ENCODE measurements at regions of chr10 and their contacts with region 1.

Region 1: GRCh38 chr10:98134431-98135221 is at the start of gene R3HCC1L:
- DNase-seq: peak; percentile 94
- H3K4me3 Mint-ChIP-seq: peak within 1 kb of the TSS; percentile 89
- H3K27ac Mint-ChIP-seq: peak within 1 kb of the TSS; percentile 96
- H3K4me1 Mint-ChIP-seq: peaks cover 36% of the 10 kb centered on the region
- H3K27me3 Mint-ChIP-seq: no peaks in the 10 kb centered on the region
- total RNA-seq, gene R3HCC1L: 13.4 to 13.6 TPM

Region 2: GRCh38 chr10:97292097-97292862 is 842.3 kb before region 1 on chr10 and contains the start of gene ARHGAP19:
- CTCF ChIA-PET with region 1: no interaction called
- intact Hi-C with region 1: loop called (anchors 5 kb)
- DNase-seq: peak; percentile 98
- H3K4me3 Mint-ChIP-seq: peak within 1 kb of the TSS; percentile 91
- H3K27ac Mint-ChIP-seq: peak within 1 kb of the TSS; percentile 88
- H3K4me1 Mint-ChIP-seq: peaks cover 23% of the 10 kb centered on the region
- H3K27me3 Mint-ChIP-seq: no peaks in the 10 kb centered on the region
- total RNA-seq, gene ARHGAP19: 76.7 to 91.9 TPM

Region 3: GRCh38 chr10:97640174-97640867 is 494.3 kb before region 1 on chr10 and contains the start of gene PI4K2A:
- CTCF ChIA-PET with region 1: no interaction called
- intact Hi-C with region 1: loop called (anchors 1 kb)
- DNase-seq: peak; percentile 100
- H3K4me3 Mint-ChIP-seq: peak within 1 kb of the TSS; percentile 93
- H3K27ac Mint-ChIP-seq: peak within 1 kb of the TSS; percentile 73
- H3K4me1 Mint-ChIP-seq: peaks cover 18% of the 10 kb centered on the region
- H3K27me3 Mint-ChIP-seq: no peaks in the 10 kb centered on the region
- total RNA-seq, gene PI4K2A: 8.9 to 9.4 TPM

Region 4: GRCh38 chr10:97736902-97737769 is 397.5 kb before region 1 on chr10 and contains the start of gene ZFYVE27:
- CTCF ChIA-PET with region 1: no interaction called
- intact Hi-C with region 1: loop called (anchors 2 kb)
- DNase-seq: peak; percentile 98
- H3K4me3 Mint-ChIP-seq: peak within 1 kb of the TSS; percentile 92
- H3K27ac Mint-ChIP-seq: peak within 1 kb of the TSS; percentile 93
- H3K4me1 Mint-ChIP-seq: peaks cover 44% of the 10 kb centered on the region
- H3K27me3 Mint-ChIP-seq: no peaks in the 10 kb centered on the region
- total RNA-seq, gene ZFYVE27: 18.0 to 18.4 TPM

Region 5: GRCh38 chr10:98097616-98098015 is 37.0 kb before region 1 on chr10:
- CTCF ChIA-PET with region 1: no interaction called
- intact Hi-C with region 1: no loop called
- DNase-seq: no peak
- H3K4me3 Mint-ChIP-seq: no peak overlapping the region
- H3K27ac Mint-ChIP-seq: no peak overlapping the region
- H3K4me1 Mint-ChIP-seq: no peaks in the 10 kb centered on the region
- H3K27me3 Mint-ChIP-seq: peaks cover 7% of the 10 kb centered on the region

Region 6: GRCh38 chr10:98446661-98447221 is 312.1 kb after region 1 on chr10 and contains the start of gene HPS1:
- CTCF ChIA-PET with region 1: no interaction called
- intact Hi-C with region 1: loop called (anchors 1 kb)
- DNase-seq: peak; percentile 86
- H3K4me3 Mint-ChIP-seq: peak within 1 kb of the TSS; percentile 88
- H3K27ac Mint-ChIP-seq: peak within 1 kb of the TSS; percentile 84
- H3K4me1 Mint-ChIP-seq: peaks cover 40% of the 10 kb centered on the region
- H3K27me3 Mint-ChIP-seq: peaks cover 3% of the 10 kb centered on the region
- total RNA-seq, gene HPS1: 28.1 to 31.0 TPM

Region 7: GRCh38 chr10:99732033-99732912 is 1597.6 kb after region 1 on chr10 and contains the starts of genes COX15 and CUTC:
- CTCF ChIA-PET with region 1: no interaction called
- intact Hi-C with region 1: loop called (anchors 1 kb)
- DNase-seq: peak; percentile 96
- H3K4me3 Mint-ChIP-seq: peak within 1 kb of the TSS; percentile 99
- H3K27ac Mint-ChIP-seq: peak within 1 kb of the TSS; percentile 96
- H3K4me1 Mint-ChIP-seq: peaks cover 32% of the 10 kb centered on the region
- H3K27me3 Mint-ChIP-seq: no peaks in the 10 kb centered on the region
- total RNA-seq, gene COX15: 36.3 to 38.8 TPM
- total RNA-seq, gene CUTC: 21.6 to 21.9 TPM